Ovary (tissue), 10 donors: ENCODE measurements at regions of chr2 and their contacts with region 1.

Region 1: GRCh38 chr2:159712143-159712928 is at the start of gene MARCHF7:
- DNase-seq: peak; percentile 96 to 98 (median 97)
- H3K4me3 ChIP-seq: peak within 1 kb of the TSS; percentile 80
- H3K27ac ChIP-seq: peak within 1 kb of the TSS; percentile 74 to 85
- H3K4me1 ChIP-seq: peaks cover 6% of the 10 kb centered on the region
- H3K27me3 ChIP-seq: no peaks in the 10 kb centered on the region
- CTCF ChIP-seq: peak in 2 of 3 donors; percentile 62 to 64
- EP300 ChIP-seq: no peak
- POLR2A ChIP-seq: peak; percentile 94
- total RNA-seq, gene MARCHF7: 68.1 to 89.0 (median 84.2) TPM

Region 2: DNA sequence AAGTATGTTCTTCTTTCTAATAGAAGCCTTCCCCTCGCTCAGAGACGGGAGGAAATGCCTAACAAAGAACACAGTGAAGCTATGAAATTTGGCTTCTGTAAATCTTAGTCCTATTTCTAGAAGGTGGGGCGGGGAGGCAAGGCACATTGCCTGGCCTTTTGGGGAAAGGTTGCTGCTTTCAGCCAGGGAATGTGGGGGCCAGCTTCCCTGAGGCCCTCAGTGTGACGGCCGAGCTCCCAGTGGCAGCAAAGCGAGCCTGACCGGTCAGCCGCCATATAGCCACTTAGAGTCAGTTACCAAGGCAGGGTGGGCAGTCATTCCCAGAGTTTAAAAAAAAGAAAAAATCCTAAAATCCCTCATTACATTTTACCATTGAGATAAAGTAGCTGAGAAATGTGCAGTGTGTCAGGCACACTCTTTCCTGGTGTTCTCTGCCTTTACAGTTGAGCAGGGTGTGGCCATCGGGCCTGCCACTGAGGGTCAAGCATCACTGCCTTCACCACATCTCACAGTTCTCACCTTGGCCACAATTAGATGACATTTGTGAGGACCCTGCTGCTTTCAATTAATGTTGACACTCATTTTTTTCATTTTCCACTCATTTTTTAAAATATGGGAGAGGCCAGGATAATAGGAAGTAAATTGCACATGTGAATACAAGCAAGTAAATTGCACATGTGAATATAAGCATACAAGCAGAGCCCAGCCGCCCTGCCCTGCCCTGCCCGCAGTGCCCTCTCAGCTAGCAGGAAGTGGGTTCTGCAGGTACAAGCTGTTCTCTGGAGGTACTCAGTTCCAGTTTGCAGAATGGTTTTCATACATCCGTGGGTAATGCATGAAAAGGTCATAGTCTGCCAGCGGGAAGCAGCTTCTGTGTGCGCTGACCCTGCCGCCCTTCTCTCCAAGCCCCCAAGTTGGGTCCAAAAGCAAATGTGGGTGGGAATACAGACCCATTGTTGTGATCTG is 502.7 kb before region 1 on chr2:
- intact Hi-C with region 1: no loop called
- DNase-seq: no peak
- H3K4me3 ChIP-seq: no peak overlapping the region
- H3K27ac ChIP-seq: no peak overlapping the region
- H3K4me1 ChIP-seq: no peaks in the 10 kb centered on the region
- H3K27me3 ChIP-seq: no peaks in the 10 kb centered on the region
- CTCF ChIP-seq: no peak
- EP300 ChIP-seq: no peak
- POLR2A ChIP-seq: no peak

Region 3: GRCh38 chr2:159275111-159275510 is 437.2 kb before region 1 on chr2:
- intact Hi-C with region 1: loop called in 1 of 4 experiments (anchors 5 kb)
- DNase-seq: no peak
- H3K4me3 ChIP-seq: no peak overlapping the region
- H3K27ac ChIP-seq: no peak overlapping the region
- H3K4me1 ChIP-seq: no peaks in the 10 kb centered on the region
- H3K27me3 ChIP-seq: no peaks in the 10 kb centered on the region
- CTCF ChIP-seq: no peak
- EP300 ChIP-seq: no peak
- POLR2A ChIP-seq: no peak

Region 4: DNA sequence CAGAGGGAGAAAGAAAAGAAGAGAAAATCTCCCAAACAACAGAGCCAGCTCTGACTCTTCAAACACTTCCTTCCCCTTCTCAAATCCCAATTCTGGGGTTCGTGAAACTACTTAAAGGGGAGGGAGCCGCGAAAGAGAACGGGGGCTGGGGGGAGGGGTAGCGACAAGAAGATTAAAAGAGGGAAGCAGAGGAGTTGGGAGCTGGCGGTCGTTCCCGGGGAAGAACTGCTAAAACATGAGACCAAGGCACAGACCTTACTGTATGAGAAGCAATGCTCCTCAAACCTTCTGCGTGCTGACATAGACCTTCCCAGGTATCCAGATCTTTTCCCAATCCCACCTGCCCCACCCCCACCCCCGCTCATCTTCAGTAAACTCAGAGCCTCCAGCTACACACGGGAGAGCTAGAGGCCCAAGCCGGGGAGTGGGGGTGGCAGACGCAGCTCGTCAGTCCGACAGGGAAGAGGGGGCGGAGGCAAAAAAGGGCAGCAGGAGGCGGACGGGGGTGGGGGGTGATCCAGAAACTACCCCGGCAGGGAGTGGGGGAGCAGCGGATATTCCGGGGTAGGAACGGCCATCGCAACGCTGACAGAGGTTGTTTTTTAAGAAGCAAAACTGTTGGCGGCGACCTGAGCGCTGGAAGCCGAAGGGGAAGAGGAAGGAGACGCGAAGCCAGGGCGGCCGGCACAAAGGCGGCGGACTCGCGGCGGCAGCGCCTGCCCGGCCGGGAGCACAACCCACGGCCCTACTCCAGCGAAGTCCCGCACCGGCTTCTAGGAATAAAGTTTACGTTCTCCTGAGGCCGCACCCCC is 97.0 kb before region 1 on chr2:
- intact Hi-C with region 1: loop called in 2 of 4 experiments (anchors 5 kb)
- DNase-seq: peak; percentile 91 to 94 (median 93)
- H3K4me3 ChIP-seq: peak overlapping the region; percentile 72
- H3K27ac ChIP-seq: peak overlapping the region; percentile 94 to 98
- H3K4me1 ChIP-seq: no peaks in the 10 kb centered on the region
- H3K27me3 ChIP-seq: peaks cover 2% of the 10 kb centered on the region
- CTCF ChIP-seq: no peak
- EP300 ChIP-seq: no peak
- POLR2A ChIP-seq: peak; percentile 58

Region 5: DNA sequence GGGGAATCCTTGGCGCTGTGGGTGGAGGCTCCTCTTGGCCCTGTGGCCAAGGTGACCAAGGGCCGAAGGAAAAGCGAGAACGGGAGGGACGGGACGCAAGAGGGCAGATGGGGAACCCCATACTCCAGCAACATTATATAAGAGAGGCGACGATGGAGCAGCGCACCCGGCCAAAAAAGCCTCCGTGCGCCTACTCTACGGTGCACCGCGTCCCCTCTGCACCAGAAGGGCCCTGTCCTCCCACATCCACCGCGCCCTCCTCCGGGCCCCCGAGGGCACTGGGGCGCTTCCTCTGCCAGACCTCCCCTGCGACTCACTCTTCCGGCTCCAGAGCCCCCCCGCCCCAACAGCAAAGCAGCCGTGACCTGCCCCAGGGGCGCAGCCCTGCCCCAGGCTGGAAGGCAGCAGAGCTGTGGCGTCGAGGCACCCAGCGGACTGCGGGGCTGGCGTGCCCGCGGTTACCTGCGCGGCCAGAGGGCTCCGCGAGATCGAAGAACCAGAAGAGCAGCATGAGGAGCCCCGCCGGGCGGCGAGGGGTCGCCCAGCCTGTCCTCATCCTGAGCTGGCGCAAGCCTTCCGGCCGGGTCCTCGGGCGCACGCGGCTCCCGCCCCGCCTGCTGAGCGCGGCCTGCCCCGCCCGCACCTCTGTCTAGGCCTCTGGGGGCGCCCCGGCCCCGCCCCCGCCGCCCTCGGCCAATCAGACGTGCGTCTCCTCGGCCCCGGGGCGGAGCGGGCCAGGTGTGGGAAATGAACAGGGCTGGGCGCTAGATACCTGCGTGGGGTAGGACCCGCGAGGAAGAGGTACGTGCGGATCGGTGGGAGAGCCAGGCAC is 192.0 kb after region 1 on chr2:
- intact Hi-C with region 1: no loop called
- DNase-seq: peak in 3 of 5 donors; percentile 21 to 51 (median 37)
- H3K4me3 ChIP-seq: peak within 1 kb of the TSS; percentile 32
- H3K27ac ChIP-seq: no peak within 1 kb of the TSS
- H3K4me1 ChIP-seq: peaks cover 4% of the 10 kb centered on the region
- H3K27me3 ChIP-seq: no peaks in the 10 kb centered on the region
- CTCF ChIP-seq: no peak
- EP300 ChIP-seq: no peak
- POLR2A ChIP-seq: no peak